Caco-2 (cell line): ENCODE measurements at regions of chr1 and their contacts with region 1.

Region 1: GRCh38 chr1:151594143-151594625 is 17.7 kb upstream of the SNX27 start:
- DNase-seq: peak; percentile 88 to 90
- H3K4me3 ChIP-seq: no peak overlapping the region
- H3K4me3 Mint-ChIP-seq: peak overlapping the region; percentile 69
- H3K27ac Mint-ChIP-seq: peak overlapping the region; percentile 74
- H3K4me1 ChIP-seq: peaks cover 18% of the 10 kb centered on the region
- H3K4me1 Mint-ChIP-seq: peaks cover 41% of the 10 kb centered on the region
- H3K27me3 ChIP-seq: no peaks in the 10 kb centered on the region
- H3K27me3 Mint-ChIP-seq: no peaks in the 10 kb centered on the region
- CTCF ChIP-seq: peak; percentile 92 to 95

Region 2: GRCh38 chr1:151547119-151547899 is 46.9 kb before region 1 on chr1:
- CTCF ChIA-PET with region 1: no interaction called
- POLR2A ChIA-PET with region 1: no interaction called
- intact Hi-C with region 1: loop called (anchors 5 kb)
- DNase-seq: peak; percentile 92 to 96
- H3K4me3 ChIP-seq: no peak overlapping the region
- H3K4me3 Mint-ChIP-seq: peak overlapping the region; percentile 64
- H3K27ac Mint-ChIP-seq: peak overlapping the region; percentile 89
- H3K4me1 ChIP-seq: peaks cover 65% of the 10 kb centered on the region
- H3K4me1 Mint-ChIP-seq: peaks cover 62% of the 10 kb centered on the region
- H3K27me3 ChIP-seq: no peaks in the 10 kb centered on the region
- H3K27me3 Mint-ChIP-seq: no peaks in the 10 kb centered on the region
- CTCF ChIP-seq: no peak

Region 3: DNA sequence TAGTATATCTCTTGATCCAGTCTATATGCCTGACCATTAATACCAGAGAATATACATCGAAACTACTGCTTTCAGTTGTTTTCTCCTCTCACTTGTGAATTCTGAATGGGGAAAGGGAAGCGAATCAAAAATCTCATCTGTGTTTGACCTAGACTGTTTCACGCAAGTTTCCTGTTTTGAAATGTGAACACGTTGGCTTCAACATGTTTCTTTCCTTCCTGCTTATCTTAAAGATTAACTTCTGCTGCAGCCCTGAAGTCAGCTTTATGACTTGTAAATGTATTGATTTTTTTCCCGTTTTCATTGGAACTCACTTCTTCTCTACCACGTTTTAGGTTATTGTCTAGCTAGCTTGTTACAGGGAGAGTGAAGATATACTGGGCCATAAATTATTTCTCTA is 67.6 kb after region 1 on chr1:
- CTCF ChIA-PET with region 1: no interaction called
- POLR2A ChIA-PET with region 1: no interaction called
- intact Hi-C with region 1: loop called (anchors 10 kb)
- DNase-seq: no peak
- H3K4me3 ChIP-seq: no peak overlapping the region
- H3K4me3 Mint-ChIP-seq: no peak overlapping the region
- H3K27ac Mint-ChIP-seq: no peak overlapping the region
- H3K4me1 ChIP-seq: no peaks in the 10 kb centered on the region
- H3K4me1 Mint-ChIP-seq: no peaks in the 10 kb centered on the region
- H3K27me3 ChIP-seq: no peaks in the 10 kb centered on the region
- H3K27me3 Mint-ChIP-seq: no peaks in the 10 kb centered on the region
- CTCF ChIP-seq: no peak

Region 4: GRCh38 chr1:151729157-151729965 is 135.2 kb after region 1 on chr1:
- CTCF ChIA-PET with region 1: no interaction called
- POLR2A ChIA-PET with region 1: no interaction called
- intact Hi-C with region 1: no loop called
- DNase-seq: no peak
- H3K4me3 ChIP-seq: no peak overlapping the region
- H3K4me3 Mint-ChIP-seq: no peak overlapping the region
- H3K27ac Mint-ChIP-seq: no peak overlapping the region
- H3K4me1 ChIP-seq: peaks cover 2% of the 10 kb centered on the region; the same call in 1 of the 2 replicates
- H3K4me1 Mint-ChIP-seq: peaks cover 10% of the 10 kb centered on the region
- H3K27me3 ChIP-seq: no peaks in the 10 kb centered on the region
- H3K27me3 Mint-ChIP-seq: no peaks in the 10 kb centered on the region
- CTCF ChIP-seq: no peak

Region 5: DNA sequence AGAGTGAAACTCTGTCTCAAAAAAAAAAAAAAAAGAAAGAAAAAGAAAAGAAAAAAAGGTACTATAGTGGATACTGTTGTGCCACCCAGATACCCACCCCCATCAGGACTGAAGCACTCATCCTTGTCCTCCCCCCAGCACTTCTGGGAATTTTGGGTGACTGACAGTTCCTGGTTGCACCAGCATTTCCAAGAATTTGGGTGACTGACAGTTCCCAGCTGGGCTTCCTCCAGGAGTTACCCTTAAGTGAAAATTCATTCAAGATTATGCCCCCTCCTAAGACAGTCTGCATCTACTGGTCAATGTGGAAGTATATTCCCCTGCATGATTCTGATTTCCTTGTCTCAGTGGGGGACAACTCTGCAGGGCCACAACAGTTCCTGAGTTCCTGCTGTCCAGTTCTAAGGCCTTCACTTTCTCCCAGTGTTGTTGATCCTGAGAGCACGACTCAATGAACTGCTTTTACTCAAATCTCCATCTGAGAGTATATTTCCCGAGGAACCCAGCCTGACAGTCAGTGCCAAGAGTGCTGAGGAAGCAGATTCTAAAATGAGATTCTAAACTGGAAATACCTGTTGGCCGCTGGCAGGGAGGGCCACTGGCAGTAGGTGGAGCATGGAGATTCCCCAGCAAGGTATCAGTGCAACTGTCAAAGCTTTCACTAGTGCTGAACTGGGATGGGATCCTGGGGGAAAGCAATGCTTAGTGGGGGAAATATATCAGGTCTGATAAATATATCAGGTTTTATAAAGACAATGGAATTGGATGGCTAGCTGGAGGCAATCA is 145.6 kb after region 1 on chr1:
- CTCF ChIA-PET with region 1: interaction called, 3 read pairs
- POLR2A ChIA-PET with region 1: no interaction called
- intact Hi-C with region 1: loop called (anchors 1 kb)
- DNase-seq: peak in 1 of 2 experiments; percentile 63
- H3K4me3 ChIP-seq: no peak overlapping the region
- H3K4me3 Mint-ChIP-seq: no peak overlapping the region
- H3K27ac Mint-ChIP-seq: no peak overlapping the region
- H3K4me1 ChIP-seq: 0 out of 2 replicates have a peak, but pooled peaks cover 7% of the 10 kb centered on the region
- H3K4me1 Mint-ChIP-seq: peaks cover 12% of the 10 kb centered on the region
- H3K27me3 ChIP-seq: no peaks in the 10 kb centered on the region
- H3K27me3 Mint-ChIP-seq: peaks cover 3% of the 10 kb centered on the region
- CTCF ChIP-seq: peak in 1 of 2 experiments; percentile 5